Heart right ventricle (tissue), 16 donors: ENCODE measurements at regions of chr3 and their contacts with region 1.

Region 1: DNA sequence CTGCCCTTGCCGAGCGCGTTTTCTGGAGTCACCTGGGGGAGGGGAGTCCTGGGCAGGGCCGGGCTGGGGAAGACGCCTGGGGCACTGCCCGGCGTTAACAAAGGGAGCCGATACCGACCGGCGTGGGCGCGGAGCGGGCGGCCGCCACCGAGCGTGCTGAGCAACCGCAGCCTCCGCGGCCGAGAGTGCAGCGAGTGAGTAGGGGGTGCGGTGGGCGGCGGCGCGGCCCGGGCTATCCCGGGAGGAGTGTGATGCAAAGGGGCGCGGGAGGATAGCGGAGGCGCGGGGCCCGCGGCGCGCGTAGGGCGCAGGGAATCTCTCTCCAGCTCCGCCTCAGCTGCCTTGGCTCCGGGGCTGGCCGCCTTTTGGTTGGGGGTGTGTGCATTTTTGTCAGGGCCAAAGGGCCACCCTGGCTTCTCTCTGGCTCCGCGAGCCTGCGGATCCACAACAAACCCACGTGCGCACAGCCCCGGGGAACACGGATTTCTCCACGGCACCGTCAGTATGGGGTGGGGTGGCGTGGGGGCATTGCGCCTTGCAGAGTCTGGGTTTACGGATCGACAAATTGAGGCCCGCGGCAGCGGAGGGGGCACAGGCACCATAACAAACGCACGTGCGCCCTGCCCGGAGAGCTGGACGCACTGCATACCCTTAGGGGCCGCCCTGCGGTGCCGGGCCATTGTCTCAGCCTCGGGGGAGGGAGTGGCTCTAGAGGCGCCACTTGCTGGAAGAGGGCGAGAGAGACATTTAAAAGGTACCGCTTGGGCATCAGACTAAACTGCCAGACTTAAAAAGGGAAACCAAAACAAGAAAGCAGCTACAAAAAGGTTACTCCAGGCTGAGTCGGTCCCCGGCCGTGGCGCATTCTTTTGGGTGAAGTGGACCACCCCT is 560 bp downstream of the ST6GAL1 start:
- DNase-seq: peak; percentile 78 to 79
- ATAC-seq: peak; percentile 75 to 92 (median 84)
- H3K4me3 ChIP-seq: peak overlapping the region; percentile 70 to 97 (median 92)
- H3K27ac ChIP-seq: peak overlapping the region; percentile 91 to 97 (median 96)
- H3K4me1 ChIP-seq: peaks cover 11 to 56% (median 44%) of the 10 kb centered on the region in 9 donors
- H3K27me3 ChIP-seq: no peaks in the 10 kb centered on the region
- CTCF ChIP-seq: peak in 7 of 9 donors; percentile 10 to 48 (median 19)

Region 2: DNA sequence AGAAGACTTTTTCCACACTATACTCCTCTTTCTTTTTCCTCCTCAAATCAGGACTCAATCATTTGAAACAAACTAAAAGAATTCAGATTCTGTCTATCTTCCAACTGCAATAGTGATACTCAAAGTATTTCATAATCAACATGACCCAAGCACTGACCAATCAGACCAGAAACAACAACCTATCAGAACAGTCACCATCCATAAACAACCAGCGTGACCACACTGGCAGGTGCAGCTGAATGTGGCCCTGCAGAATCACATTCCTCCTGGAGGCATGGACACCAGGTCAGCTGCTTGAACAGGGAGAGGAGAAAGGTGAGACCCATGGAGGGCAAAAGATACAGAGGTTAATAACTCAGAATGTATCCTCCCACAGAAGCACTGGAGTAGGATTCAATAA is 251.7 kb before region 1 on chr3:
- intact Hi-C with region 1: no loop called
- DNase-seq: no peak
- ATAC-seq: no peak
- H3K4me3 ChIP-seq: no peak overlapping the region
- H3K27ac ChIP-seq: no peak overlapping the region
- H3K4me1 ChIP-seq: no peaks in the 10 kb centered on the region
- H3K27me3 ChIP-seq: peaks cover 0 to 21% (median 3%) of the 10 kb centered on the region in 7 donors
- CTCF ChIP-seq: no peak

Region 3: GRCh38 chr3:186849374-186849975 is 81.4 kb before region 1 on chr3:
- intact Hi-C with region 1: loop called in 7 of 10 experiments (anchors 5 to 10 kb)
- DNase-seq: no peak
- ATAC-seq: peak in 6 of 8 donors; percentile 49 to 64 (median 60)
- H3K4me3 ChIP-seq: no peak overlapping the region
- H3K27ac ChIP-seq: no peak overlapping the region
- H3K4me1 ChIP-seq: no peaks in the 10 kb centered on the region
- H3K27me3 ChIP-seq: peaks cover 0 to 10% (median 3%) of the 10 kb centered on the region in 7 donors
- CTCF ChIP-seq: peak in 8 of 9 donors; percentile 20 to 78 (median 66)

Region 4: GRCh38 chr3:186869253-186870100 is 61.4 kb before region 1 on chr3:
- intact Hi-C with region 1: loop called in 1 of 10 experiments (anchors 5 kb)
- DNase-seq: no peak
- ATAC-seq: no peak
- H3K4me3 ChIP-seq: no peak overlapping the region
- H3K27ac ChIP-seq: peak overlapping the region in 1 of 10 donors; percentile 10
- H3K4me1 ChIP-seq: peaks cover 0 to 32% (median 15%) of the 10 kb centered on the region in 9 donors
- H3K27me3 ChIP-seq: no peaks in the 10 kb centered on the region
- CTCF ChIP-seq: no peak

Region 5: DNA sequence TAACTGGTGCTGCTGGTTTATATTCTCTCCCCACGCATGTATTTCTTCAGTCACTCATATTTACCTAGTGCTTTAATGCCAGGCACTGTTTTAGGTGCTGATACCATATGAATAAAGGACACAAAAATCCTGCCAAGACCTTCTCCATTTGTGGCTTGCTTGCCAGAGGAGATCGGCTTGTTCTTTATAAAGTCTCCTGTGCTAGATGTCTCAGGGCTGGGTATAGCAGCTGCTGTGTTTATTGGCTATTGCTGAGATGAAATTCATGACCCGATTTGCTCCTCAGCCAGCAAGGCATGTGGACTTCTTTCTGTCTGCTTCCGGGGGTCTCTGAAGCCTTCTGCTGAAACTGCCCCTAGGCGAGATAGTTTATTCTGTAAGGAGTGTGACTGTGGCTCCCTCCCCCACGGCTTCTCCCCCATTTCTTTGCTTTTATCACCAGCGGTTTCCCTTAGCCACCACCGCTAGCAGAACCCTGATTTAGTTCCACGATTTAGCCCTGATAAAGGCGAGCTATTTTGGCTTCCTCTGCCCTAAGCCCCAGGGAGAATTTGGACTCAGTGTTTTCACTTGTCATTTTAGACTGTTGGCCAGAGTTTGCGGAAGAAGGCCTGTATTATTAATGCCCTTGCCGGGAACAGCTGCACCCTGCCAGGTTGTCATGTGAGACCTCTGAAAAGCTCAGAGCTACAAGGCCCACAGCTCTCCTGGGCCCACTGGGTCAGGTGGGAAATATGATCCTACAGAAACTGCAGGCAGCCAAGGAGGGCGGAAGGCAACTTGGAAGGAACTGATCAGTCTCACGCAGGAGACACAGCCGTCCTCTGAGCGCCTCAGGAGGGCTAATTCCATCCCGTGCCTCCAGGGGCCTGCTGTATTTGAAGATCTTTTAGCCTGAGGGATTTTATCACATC is 46.2 kb after region 1 on chr3:
- intact Hi-C with region 1: loop called in 4 of 10 experiments (anchors 2 to 5 kb)
- DNase-seq: peak; percentile 65 to 79
- ATAC-seq: peak; percentile 84 to 92 (median 88)
- H3K4me3 ChIP-seq: peak overlapping the region in 5 of 10 donors; percentile 3 to 28 (median 15)
- H3K27ac ChIP-seq: peak overlapping the region; percentile 62 to 94 (median 88)
- H3K4me1 ChIP-seq: peaks cover 3 to 65% (median 55%) of the 10 kb centered on the region in 9 donors
- H3K27me3 ChIP-seq: no peaks in the 10 kb centered on the region
- CTCF ChIP-seq: peak in 4 of 9 donors; percentile 8 to 22 (median 16)

Region 6: DNA sequence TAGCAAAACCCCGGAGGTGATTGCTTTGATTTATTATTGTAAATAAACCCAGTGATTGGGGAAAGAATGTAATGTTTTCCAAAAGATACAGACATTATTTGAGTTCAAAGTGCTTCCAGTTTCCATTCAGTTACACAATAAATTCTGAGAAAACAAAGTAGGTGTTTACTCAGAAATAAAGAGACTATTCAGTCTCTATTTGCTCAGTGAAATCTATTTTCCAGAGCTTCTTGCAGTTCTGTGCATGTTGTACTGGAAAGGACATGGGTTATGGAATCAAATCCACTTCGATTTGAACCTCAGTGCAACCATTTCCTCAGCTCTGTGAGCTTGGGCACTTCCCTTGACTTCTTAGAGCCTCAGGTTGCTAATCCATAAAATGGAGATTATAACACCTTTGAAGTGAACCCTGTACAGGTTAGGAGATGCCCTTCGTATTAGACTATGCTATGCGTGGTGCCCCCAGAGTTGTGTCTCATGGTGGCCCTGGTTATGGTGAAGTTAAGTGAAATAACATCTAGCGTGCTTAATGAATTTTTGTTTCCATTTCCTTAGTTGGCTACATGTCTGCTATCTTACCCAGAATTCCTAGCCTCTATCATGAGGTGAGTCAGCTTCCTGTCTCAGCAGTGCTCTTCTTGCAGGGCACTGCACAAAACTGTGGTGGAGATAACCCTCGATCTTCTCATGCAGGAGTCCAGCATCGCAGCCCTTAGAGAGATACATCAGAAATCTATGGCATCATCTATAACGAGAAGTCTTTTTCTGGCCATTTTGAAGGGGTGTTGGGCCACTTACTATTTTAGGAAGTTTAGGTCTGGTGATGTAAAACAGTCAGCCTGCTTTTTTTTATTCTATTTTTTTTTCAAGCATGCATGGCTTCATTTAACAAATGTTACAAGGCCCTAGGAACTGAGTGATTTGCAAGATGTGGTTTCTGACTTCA is 110.7 kb after region 1 on chr3:
- intact Hi-C with region 1: loop called in 3 of 10 experiments (anchors 10 kb)
- DNase-seq: no peak
- ATAC-seq: peak in 5 of 8 donors; percentile 26 to 67 (median 58)
- H3K4me3 ChIP-seq: no peak overlapping the region
- H3K27ac ChIP-seq: peak overlapping the region in 7 of 10 donors; percentile 1 to 83 (median 41)
- H3K4me1 ChIP-seq: peaks cover 3 to 77% (median 67%) of the 10 kb centered on the region in 9 donors
- H3K27me3 ChIP-seq: no peaks in the 10 kb centered on the region
- CTCF ChIP-seq: no peak